Activated T-helper 1 cell treated with anti-CD3 and anti-CD28 coated beads, Interleukin-12 subunit alpha, Interleukin-12 subunit beta, Interleukin-2, Interleukin-4 antibody, amounts not matched to agents 30 ng/mL and 10 ng/mL and 1 ng/mL, durations not matched to agents 14 hours and 24 hours and 36 hours (primary cell): ENCODE measurements at regions of chr6 and their contacts with region 1.

Region 1: GRCh38 chr6:90586836-90587638 is at the start of gene MAP3K7:
- DNase-seq: peak; percentile 92
- H3K4me3 Mint-ChIP-seq: peak within 1 kb of the TSS; percentile 93
- H3K27ac Mint-ChIP-seq: peak within 1 kb of the TSS; percentile 96
- H3K4me1 Mint-ChIP-seq: peaks cover 39% of the 10 kb centered on the region
- H3K27me3 Mint-ChIP-seq: peaks cover 8% of the 10 kb centered on the region
- total RNA-seq, gene MAP3K7: 31.0 and 35.9 TPM in 2 replicates

Region 2: GRCh38 chr6:89297695-89298351 is 1289.2 kb before region 1 on chr6:
- intact Hi-C with region 1: loop called (anchors 1 kb)
- DNase-seq: peak; percentile 64
- H3K4me3 Mint-ChIP-seq: peak overlapping the region; percentile 43
- H3K27ac Mint-ChIP-seq: peak overlapping the region; percentile 97
- H3K4me1 Mint-ChIP-seq: peaks cover 28% of the 10 kb centered on the region
- H3K27me3 Mint-ChIP-seq: peaks cover 2% of the 10 kb centered on the region

Region 3: GRCh38 chr6:89432875-89433251 is 1154.2 kb before region 1 on chr6 and contains the start of gene ANKRD6:
- intact Hi-C with region 1: loop called (anchors 10 kb)
- DNase-seq: peak; percentile 80
- H3K4me3 Mint-ChIP-seq: peak within 1 kb of the TSS; percentile 87
- H3K27ac Mint-ChIP-seq: peak within 1 kb of the TSS; percentile 70
- H3K4me1 Mint-ChIP-seq: peaks cover 18% of the 10 kb centered on the region
- H3K27me3 Mint-ChIP-seq: peaks cover 32% of the 10 kb centered on the region
- total RNA-seq, gene ANKRD6: 1.3 and 2.3 TPM in 2 replicates

Region 4: DNA sequence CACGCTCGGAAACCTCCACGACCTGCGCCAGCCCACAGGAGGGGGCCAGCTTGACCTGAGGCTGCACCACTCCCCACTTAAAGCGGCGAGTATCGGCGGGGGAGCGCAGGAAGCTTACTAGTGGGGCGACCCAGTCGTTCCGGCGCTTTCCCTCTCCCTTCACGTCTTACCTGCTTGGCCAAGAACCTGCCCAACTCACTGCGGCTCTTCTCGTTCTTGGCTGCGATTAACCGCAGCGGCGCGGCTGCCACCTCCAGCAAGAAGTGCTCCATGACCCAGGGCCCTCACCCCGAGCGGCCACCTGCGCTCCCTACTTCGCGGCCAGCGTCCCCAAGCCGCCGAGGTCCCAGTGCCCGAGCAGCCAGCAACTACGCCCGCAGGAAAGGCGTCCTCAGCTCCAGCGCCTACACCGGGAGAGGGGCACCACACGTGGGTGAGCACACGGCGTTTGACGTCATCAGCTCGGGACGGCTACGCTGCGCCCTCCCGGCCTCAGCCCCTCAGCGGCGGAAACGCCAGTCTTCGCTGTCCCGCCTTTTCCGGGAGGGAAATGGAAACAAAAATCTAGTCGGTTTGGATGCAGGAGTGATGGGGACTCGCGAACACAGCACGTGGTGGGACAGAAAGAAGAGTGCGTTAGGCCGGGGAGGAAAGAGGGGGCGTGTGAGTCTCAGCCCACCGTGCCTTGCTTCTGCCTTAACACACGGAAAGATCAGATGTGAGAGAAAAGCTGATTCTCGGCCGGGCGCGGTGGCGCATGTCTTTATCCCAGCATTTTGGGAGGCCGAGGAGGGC is 767.5 kb before region 1 on chr6 and contains the start of gene MDN1:
- intact Hi-C with region 1: loop called (anchors 1 kb)
- DNase-seq: peak; percentile 89
- H3K4me3 Mint-ChIP-seq: peak within 1 kb of the TSS; percentile 87
- H3K27ac Mint-ChIP-seq: peak within 1 kb of the TSS; percentile 97
- H3K4me1 Mint-ChIP-seq: peaks cover 33% of the 10 kb centered on the region
- H3K27me3 Mint-ChIP-seq: no peaks in the 10 kb centered on the region
- total RNA-seq, gene MDN1: 74.6 and 77.9 TPM in 2 replicates

Region 5: GRCh38 chr6:89829591-89830385 is 757.2 kb before region 1 on chr6 and contains the start of gene CASP8AP2:
- intact Hi-C with region 1: loop called (anchors 1 kb)
- DNase-seq: peak; percentile 93
- H3K4me3 Mint-ChIP-seq: peak within 1 kb of the TSS; percentile 97
- H3K27ac Mint-ChIP-seq: peak within 1 kb of the TSS; percentile 91
- H3K4me1 Mint-ChIP-seq: peaks cover 23% of the 10 kb centered on the region
- H3K27me3 Mint-ChIP-seq: no peaks in the 10 kb centered on the region
- total RNA-seq, gene CASP8AP2: 38.3 and 40.2 TPM in 2 replicates

Region 6: DNA sequence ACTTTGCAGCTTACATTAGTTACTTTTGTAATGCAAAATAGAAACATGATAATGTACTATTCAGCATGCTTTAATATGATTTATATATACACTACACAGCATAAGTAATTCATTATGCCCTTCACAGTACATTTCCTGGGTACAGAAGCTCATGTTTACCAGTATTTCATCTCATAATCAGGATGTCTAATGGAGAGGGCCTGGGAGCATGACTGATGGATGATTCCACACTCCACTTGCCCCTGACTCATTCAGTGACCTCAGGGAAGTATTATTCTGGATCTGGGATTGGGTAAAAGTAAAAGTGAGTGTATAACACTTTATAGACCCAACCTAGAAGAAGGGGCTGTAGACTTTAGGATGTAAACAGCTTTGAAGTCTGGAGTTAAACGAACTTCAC is 259.0 kb before region 1 on chr6:
- intact Hi-C with region 1: no loop called
- DNase-seq: no peak
- H3K4me3 Mint-ChIP-seq: no peak overlapping the region
- H3K27ac Mint-ChIP-seq: no peak overlapping the region
- H3K4me1 Mint-ChIP-seq: peaks cover 11% of the 10 kb centered on the region
- H3K27me3 Mint-ChIP-seq: no peaks in the 10 kb centered on the region

Region 7: DNA sequence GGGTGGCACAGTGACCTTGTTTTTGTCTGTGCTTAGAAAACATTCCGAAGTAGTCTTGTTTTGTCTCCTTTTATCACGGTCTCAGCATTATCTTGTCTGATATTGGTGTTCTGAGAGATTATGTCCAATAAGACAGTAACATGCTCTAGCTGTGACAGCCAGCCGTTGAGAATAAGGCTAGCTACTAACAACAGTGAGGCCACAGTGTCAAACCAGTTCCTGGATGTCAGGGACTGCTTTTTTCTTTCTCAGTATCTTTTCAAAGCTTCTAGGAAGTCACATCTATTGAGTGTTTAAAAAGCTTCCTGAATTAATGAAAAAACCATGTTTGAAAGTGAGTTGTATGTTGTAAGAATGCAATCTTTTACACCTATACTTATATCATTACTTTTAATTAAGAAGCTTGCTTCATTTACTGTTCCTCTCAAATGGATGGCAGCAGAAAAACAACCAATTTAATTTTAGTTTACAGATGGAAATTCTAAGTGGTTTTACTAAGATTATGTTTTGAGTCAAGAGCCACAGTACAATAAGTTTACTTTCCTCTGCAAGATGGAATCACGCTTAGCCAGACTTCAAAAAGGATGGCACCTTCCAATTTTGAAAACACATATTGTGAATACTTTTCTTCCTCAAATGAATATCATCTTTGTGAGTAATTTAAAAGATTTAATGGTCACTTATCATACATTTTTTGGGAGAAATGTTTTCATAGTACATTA is 53.3 kb before region 1 on chr6:
- intact Hi-C with region 1: loop called (anchors 2 kb)
- DNase-seq: no peak
- H3K4me3 Mint-ChIP-seq: peak overlapping the region; percentile 40
- H3K27ac Mint-ChIP-seq: peak overlapping the region; percentile 87
- H3K4me1 Mint-ChIP-seq: peaks cover 52% of the 10 kb centered on the region
- H3K27me3 Mint-ChIP-seq: no peaks in the 10 kb centered on the region

Region 8: GRCh38 chr6:90610751-90611542 is 23.9 kb after region 1 on chr6:
- intact Hi-C with region 1: loop called (anchors 2 kb)
- DNase-seq: peak; percentile 14
- H3K4me3 Mint-ChIP-seq: peak overlapping the region; percentile 84
- H3K27ac Mint-ChIP-seq: peak overlapping the region; percentile 47
- H3K4me1 Mint-ChIP-seq: peaks cover 13% of the 10 kb centered on the region
- H3K27me3 Mint-ChIP-seq: peaks cover 64% of the 10 kb centered on the region